AG04450 (cell line): ENCODE measurements at regions of chr11 and their contacts with region 1.

Region 1: GRCh38 chr11:124837491-124837856 is 27.8 kb upstream of the ROBO3 start:
- DNase-seq: peak; percentile 66
- H3K4me3 ChIP-seq: no peak overlapping the region
- H3K27ac ChIP-seq: no peak overlapping the region
- H3K27me3 ChIP-seq: peaks cover 44% of the 10 kb centered on the region
- CTCF ChIP-seq: peak; percentile 81

Region 2: GRCh38 chr11:124662106-124662505 is 175.4 kb before region 1 on chr11:
- CTCF ChIA-PET with region 1: interaction called, 23 read pairs
- POLR2A ChIA-PET with region 1: no interaction called
- DNase-seq: no peak
- H3K4me3 ChIP-seq: no peak overlapping the region
- H3K27ac ChIP-seq: no peak overlapping the region
- H3K27me3 ChIP-seq: no peaks in the 10 kb centered on the region
- CTCF ChIP-seq: no peak

Region 3: GRCh38 chr11:124673333-124674167 is 163.9 kb before region 1 on chr11 and contains the starts of genes SIAE and SPA17:
- CTCF ChIA-PET with region 1: interaction called, 164 read pairs
- POLR2A ChIA-PET with region 1: interaction called, 4 read pairs
- DNase-seq: peak; percentile 92
- H3K4me3 ChIP-seq: peak within 1 kb of the TSS; percentile 74
- H3K27ac ChIP-seq: peak within 1 kb of the TSS; percentile 69
- H3K27me3 ChIP-seq: no peaks in the 10 kb centered on the region
- CTCF ChIP-seq: no peak
- polyA plus RNA-seq, gene SIAE: 33.5 and 37.9 TPM in 2 replicates
- polyA plus RNA-seq, gene SPA17: 6.5 and 8.4 TPM in 2 replicates

Region 4: DNA sequence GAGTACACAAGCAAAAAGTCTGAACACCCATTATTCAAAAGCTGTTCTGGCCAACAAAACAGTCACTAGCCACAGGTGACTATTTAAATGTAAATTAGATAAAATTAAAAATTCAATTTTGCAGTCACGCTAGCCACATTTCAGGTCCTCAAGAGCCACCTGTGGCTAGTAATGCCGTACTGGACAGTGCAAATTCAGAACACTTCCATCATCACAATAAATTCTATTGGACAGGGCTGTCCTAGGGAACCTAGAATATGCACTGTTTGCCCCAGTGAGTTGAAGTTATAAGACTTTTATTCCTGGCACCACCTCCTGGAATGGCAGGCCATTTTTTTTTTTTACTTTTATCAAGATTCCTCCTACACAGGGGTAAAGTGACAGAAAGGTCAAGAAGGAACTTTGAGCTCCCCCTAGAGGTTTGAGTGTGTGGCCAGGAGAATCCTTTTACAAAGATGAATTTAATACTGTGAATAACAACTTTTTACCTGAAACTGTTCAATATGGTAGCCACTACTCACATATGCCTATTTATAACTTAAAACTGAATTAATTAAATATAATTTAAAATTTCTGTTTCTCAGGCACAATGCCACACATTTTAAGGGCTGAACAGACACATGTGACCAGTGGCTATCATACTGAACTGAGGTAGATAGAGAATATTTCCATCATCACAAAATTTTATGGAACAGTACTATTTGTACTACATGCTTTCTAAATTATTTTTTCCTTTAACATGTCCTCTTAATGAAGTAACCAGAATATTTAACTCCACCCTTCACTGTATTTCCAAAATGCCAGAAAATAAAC is 43.8 kb before region 1 on chr11:
- CTCF ChIA-PET with region 1: interaction called, 27 read pairs
- POLR2A ChIA-PET with region 1: interaction called, 8 read pairs
- DNase-seq: no peak
- H3K4me3 ChIP-seq: no peak overlapping the region
- H3K27ac ChIP-seq: no peak overlapping the region
- H3K27me3 ChIP-seq: no peaks in the 10 kb centered on the region
- CTCF ChIP-seq: peak; percentile 78

Region 5: DNA sequence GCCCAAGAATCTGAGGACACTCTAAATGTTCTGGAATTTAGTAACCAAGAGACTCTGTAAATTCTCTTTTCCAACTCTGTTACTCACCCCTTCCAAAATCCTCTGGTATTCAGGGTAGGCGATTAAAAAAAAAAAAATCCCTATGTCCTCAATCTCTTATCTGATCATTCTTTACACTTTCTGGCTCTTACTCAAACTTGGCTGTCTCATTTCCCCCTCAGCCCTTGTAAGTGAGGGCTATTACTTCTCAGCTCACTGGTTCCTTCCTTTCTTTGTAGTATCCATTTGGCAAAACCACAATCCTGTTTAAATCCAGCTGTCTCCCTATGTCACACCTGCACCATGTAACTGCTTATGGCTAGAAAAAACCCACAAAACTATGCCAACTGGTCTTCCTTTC is 24.6 kb before region 1 on chr11:
- CTCF ChIA-PET with region 1: interaction called, 34 read pairs
- POLR2A ChIA-PET with region 1: no interaction called
- DNase-seq: no peak
- H3K4me3 ChIP-seq: no peak overlapping the region
- H3K27ac ChIP-seq: no peak overlapping the region
- H3K27me3 ChIP-seq: peaks cover 6% of the 10 kb centered on the region
- CTCF ChIP-seq: no peak

Region 6: DNA sequence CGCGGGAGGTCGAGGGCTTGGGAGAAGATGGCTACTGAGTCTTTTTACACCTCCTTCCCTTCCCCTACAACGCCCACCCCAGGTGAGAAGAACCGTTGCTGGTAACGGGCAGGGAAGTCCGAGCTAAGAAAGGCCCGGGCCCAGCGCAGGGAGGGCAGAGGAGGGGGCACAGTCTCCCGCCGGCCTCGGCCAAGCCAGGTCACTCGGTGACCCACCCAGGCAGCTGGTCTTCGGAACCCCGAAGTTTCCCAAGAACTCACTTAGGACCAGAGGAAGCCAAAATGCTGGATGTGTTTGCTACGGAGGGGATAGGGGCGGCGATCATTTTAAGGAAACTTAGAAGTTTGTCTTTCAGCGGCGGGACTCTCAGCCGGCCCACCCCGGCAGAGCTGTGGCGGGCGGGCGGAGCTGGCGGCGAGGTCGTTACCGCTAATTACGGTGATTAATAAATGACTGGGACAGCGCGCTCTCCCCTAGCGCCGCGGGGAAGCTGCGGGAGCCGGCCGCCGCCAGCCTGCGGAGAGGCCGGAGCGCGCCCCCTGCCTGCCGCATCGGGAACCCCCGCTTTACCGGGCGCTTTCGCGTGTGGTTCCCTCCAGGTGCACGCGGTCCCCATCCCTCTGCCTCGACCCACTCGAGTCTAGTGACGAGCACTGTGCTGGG is 28.6 kb after region 1 on chr11:
- CTCF ChIA-PET with region 1: interaction called, 32 read pairs
- POLR2A ChIA-PET with region 1: no interaction called
- DNase-seq: no peak
- H3K4me3 ChIP-seq: peak overlapping the region; percentile 31
- H3K27ac ChIP-seq: no peak overlapping the region
- H3K27me3 ChIP-seq: peaks cover 97% of the 10 kb centered on the region
- CTCF ChIP-seq: peak; percentile 73

Region 7: DNA sequence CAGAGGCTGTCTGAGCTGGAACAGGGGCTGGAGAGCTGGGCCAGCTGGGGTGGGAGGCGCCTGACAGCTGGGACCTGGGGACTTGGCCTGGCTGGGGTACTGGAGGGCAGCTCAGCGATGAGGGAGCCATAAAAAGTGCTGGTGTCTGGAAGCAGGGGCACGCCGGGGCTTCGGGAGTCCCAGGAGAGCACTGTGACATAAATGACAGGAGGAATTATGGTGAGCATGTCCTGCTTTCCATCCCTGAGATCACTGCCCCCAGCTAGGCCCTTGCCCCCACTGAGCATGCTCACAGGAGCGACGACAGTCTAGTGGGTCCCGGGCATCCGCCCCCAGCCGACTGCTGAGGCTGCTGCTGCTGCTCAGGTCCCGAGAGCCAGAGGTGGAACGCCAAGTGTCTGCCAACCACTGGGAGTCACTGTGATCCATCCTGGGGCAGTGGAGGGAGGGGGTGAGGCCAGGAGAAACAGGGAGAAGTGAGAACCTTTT is 53.9 kb after region 1 on chr11:
- CTCF ChIA-PET with region 1: no interaction called
- POLR2A ChIA-PET with region 1: interaction called, 15 read pairs
- DNase-seq: no peak
- H3K4me3 ChIP-seq: no peak overlapping the region
- H3K27ac ChIP-seq: no peak overlapping the region
- H3K27me3 ChIP-seq: no peaks in the 10 kb centered on the region
- CTCF ChIP-seq: no peak

Region 8: DNA sequence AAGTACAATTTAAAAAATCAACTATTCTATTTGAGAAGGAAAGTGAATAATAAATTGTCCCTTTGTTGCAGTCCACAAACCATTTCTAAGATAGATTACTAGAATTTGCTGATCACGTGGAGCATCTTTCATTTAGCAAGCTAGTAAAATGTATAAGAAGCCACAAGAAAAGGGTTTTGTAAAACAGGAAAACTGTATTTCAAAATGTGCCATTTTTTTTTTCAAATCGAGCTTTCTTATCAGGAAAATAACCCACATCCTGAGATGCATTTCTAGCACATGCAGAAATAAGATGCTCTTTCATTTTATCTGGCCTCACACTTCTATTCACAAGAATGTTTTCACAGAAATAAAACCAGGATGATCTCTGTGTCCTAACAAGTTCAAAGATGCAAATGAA is 947.2 kb after region 1 on chr11:
- CTCF ChIA-PET with region 1: no interaction called
- POLR2A ChIA-PET with region 1: no interaction called
- DNase-seq: no peak
- H3K4me3 ChIP-seq: no peak overlapping the region
- H3K27ac ChIP-seq: no peak overlapping the region
- H3K27me3 ChIP-seq: no peaks in the 10 kb centered on the region
- CTCF ChIP-seq: no peak